Cardiac septum (tissue), 1 donor: ENCODE measurements at regions of chr10 and their contacts with region 1.

Region 1: DNA sequence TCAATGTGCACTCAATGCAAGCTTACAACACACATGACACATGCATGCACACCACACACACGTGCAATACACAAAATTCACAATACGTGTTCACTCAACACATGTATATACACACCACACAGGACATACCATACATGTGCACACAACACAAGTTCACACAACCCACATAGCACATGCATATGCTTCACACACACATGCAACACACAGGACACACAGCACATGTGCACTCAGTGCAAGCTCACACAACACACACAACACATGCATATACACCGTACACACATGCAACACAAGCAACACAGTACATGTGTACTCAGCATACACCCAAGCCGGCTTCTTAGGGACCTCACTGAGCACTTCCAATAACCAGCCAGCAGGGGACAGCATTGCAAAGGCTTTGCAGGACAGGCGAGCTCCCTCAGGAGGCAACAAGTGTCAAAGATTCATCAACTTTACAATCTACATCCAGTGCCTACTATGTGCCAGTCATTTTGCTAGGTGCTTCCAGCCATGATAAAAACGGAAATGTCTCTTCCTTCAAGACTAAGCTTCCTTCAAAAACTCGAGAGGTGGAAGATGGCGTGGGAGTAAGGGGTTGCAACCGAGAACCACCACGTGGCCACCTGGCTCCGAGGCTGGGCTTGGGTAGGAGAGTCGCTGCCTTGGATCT is 61.1 kb downstream of the JCAD start:
- DNase-seq: peak; percentile 88

Region 2: GRCh38 chr10:29746080-29746797 is 252.0 kb before region 1 on chr10:
- intact Hi-C with region 1: loop called (anchors 10 kb)
- DNase-seq: no peak

Region 3: GRCh38 chr10:29881336-29881771 is 116.9 kb before region 1 on chr10:
- intact Hi-C with region 1: no loop called
- DNase-seq: no peak

Region 4: DNA sequence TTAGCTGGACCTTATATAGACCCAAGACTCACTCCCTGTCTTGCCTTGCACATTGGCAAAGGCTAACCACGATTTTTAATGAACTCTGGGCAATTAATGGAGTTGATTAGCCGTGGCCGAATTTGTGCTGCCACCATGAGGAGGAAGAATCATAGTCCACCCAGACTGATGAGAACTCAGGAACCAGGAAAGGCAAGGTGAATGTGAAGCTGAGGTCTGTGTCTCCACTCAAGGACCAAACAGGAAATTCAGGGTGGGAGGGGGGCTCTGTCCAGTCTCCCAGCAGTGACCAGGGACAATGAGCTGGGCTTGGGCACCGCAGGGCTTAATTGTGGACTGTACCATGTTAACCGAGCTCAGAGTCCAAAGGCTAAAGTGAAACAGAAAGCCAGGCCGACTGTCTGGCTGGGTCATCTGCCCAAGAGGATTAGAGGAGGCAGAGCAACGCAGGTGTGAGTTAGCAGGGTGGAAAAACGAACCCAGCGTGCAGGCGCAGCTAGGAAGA is 188.1 kb after region 1 on chr10:
- intact Hi-C with region 1: loop called (anchors 5 kb)
- DNase-seq: no peak

Region 5: GRCh38 chr10:30241422-30242110 is 243.3 kb after region 1 on chr10:
- intact Hi-C with region 1: loop called (anchors 2 kb)
- DNase-seq: no peak